Left lung (tissue), 14 donors: ENCODE measurements at regions of chr7 and their contacts with region 1.

Region 1: DNA sequence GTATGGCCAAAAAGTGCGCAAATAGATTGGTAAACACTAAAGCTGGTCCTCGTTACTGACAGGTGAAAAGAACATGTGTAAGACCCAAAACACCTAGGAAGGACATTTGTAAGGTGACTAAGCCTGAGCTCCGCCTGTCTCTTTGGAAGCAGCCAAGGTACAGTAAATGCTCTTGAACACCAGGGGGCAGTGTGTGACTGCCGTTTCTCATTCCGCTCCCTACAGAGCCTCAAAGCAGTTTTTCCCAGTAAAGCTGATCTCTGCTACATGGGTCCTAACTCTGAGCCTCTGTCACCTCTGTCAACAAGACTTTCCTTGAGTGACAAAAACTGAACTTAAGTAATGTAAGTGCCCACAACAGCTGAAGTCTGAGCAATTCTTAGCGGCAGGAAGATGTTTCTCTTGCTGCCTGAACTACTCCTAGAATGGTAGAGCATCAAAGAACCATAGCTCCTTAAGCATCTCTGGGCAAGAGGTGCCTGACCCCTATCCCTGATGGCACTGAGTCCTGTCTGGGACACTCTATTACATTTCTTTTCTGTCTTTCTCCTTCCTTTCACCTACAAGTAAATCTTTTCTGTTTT is 238.0 kb upstream of the INHBA start:
- DNase-seq: peak in 3 of 4 donors; percentile 51 to 87 (median 76)
- ATAC-seq: peak; percentile 91
- H3K4me3 ChIP-seq: no peak overlapping the region
- H3K27ac ChIP-seq: no peak overlapping the region
- H3K4me1 ChIP-seq: peaks cover 11 to 17% of the 10 kb centered on the region in 2 donors
- H3K27me3 ChIP-seq: peaks cover 0 to 25% of the 10 kb centered on the region in 2 donors
- CTCF ChIP-seq: peak; percentile 80 to 92

Region 2: GRCh38 chr7:41674505-41675023 is 266.3 kb before region 1 on chr7:
- intact Hi-C with region 1: no loop called
- DNase-seq: no peak
- ATAC-seq: no peak
- H3K4me3 ChIP-seq: no peak overlapping the region
- H3K27ac ChIP-seq: no peak overlapping the region
- H3K4me1 ChIP-seq: no peaks in the 10 kb centered on the region
- H3K27me3 ChIP-seq: no peaks in the 10 kb centered on the region
- CTCF ChIP-seq: no peak

Region 3: GRCh38 chr7:42254202-42254601 is 313.4 kb after region 1 on chr7:
- intact Hi-C with region 1: no loop called
- DNase-seq: no peak
- ATAC-seq: peak; percentile 33
- H3K4me3 ChIP-seq: no peak overlapping the region
- H3K27ac ChIP-seq: no peak overlapping the region
- H3K4me1 ChIP-seq: no peaks in the 10 kb centered on the region
- H3K27me3 ChIP-seq: no peaks in the 10 kb centered on the region
- CTCF ChIP-seq: no peak

Region 4: DNA sequence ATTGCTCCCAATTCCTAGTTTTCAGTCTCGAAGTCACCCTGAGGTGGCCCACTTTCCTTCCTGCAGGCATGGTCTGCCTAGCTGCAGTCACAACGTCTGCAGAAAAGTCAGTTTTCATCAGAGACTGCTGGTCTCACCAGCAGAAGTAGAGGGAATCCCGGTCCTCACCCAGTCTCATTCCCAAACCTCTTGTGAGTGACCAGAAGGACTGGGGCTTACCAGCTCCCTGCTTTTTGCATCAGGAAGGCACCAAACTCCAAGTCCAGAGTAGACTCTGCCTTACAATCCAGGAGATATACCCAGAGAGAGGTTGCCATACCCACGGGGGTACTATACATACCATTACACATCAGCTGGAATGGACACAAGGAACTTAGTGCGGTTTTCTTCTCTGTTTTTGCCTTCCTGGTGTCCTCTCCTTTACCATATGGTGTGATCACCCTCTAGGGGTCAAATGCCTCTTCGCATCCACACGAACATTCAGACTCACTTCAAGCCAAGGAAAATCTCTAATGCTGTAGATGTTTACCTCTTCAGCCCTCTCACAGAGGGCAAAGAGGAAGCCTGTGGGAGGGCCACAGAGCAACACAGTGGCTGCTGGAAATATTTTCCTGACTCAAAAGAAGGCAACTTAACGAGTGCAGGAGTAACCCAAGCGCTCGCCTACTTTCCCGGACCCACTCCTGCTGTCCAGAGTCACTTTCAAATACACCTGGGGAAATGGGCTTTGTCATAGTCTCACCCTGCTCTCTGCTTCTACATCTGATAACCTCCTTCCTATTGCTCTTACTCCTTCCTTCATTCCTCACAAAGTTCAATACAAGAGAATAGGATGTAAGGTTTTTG is 750.2 kb after region 1 on chr7:
- intact Hi-C with region 1: loop called in 1 of 2 experiments (anchors 10 kb)
- DNase-seq: peak in 1 of 4 donors; percentile 71
- ATAC-seq: peak; percentile 93
- H3K4me3 ChIP-seq: no peak overlapping the region
- H3K27ac ChIP-seq: no peak overlapping the region
- H3K4me1 ChIP-seq: no peaks in the 10 kb centered on the region
- H3K27me3 ChIP-seq: no peaks in the 10 kb centered on the region
- CTCF ChIP-seq: peak; percentile 37 to 49

Region 5: DNA sequence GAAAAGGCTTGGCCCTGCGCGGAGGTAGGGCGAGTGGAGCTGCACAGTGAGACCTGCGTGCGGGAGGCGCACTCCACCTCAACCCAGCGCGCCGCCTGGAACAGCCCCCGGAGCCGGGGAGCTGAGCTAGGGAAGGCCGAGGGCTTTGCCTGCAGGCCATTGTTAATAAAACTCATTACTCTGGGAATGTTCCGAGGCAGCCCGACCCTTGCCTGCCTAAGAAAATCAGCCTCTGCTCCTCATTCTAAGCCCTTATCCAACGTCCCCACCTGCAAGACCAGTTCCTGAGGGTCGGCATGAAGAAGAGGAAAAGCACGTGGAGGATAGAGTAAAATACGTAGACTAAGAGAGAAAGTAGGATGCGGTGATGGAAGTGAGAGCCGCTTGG is 915.7 kb after region 1 on chr7:
- intact Hi-C with region 1: loop called in 1 of 2 experiments (anchors 10 kb)
- DNase-seq: peak in 1 of 4 donors; percentile 57
- ATAC-seq: peak; percentile 73
- H3K4me3 ChIP-seq: peak overlapping the region; percentile 28 to 37
- H3K27ac ChIP-seq: peak overlapping the region in 1 of 2 donors; percentile 20
- H3K4me1 ChIP-seq: peaks cover 0 to 4% of the 10 kb centered on the region in 2 donors
- H3K27me3 ChIP-seq: peaks cover 0 to 38% of the 10 kb centered on the region in 2 donors
- CTCF ChIP-seq: no peak